Panc1 (cell line): ENCODE measurements at regions of chr7 and their contacts with region 1.

Region 1: DNA sequence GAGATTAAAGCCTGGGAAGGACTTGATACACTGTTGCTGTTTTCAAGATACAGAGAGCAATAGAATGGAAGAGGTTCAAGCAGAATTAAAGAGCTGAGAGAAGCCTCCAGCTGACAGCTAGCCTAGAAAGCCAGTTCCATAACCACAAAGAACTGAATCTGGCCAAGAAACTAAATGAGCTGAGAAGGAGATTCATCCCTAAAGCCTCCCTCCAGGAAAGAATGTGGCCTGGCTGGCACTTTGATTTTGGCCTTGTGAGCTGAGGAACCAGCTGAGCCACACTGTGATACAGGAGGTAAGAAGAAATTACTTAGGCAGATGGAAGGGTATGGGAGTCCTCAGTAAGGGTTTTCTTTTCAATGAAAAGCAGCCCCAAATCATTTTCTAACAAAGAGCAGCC is 324.1 kb downstream of the PHF14 start:
- DNase-seq: no peak
- ATAC-seq: no peak; the same call in 1 of the 2 replicates
- H3K4me3 ChIP-seq: no peak overlapping the region
- H3K27ac ChIP-seq: no peak overlapping the region
- H3K4me1 ChIP-seq: no peaks in the 10 kb centered on the region
- H3K27me3 ChIP-seq: no peaks in the 10 kb centered on the region; the same call in 1 of the 2 replicates
- CTCF ChIP-seq: no peak

Region 2: GRCh38 chr7:11261519-11261958 is 36.2 kb before region 1 on chr7:
- CTCF ChIA-PET with region 1: no interaction called
- POLR2A ChIA-PET with region 1: interaction called, 23 read pairs
- in situ Hi-C with region 1: no loop called
- intact Hi-C with region 1: no loop called
- DNase-seq: no peak
- ATAC-seq: no peak
- H3K4me3 ChIP-seq: no peak overlapping the region
- H3K27ac ChIP-seq: no peak overlapping the region
- H3K4me1 ChIP-seq: no peaks in the 10 kb centered on the region
- H3K27me3 ChIP-seq: peaks cover 24% of the 10 kb centered on the region
- CTCF ChIP-seq: no peak